Lower leg skin (tissue), 4 donors: ENCODE measurements at regions of chr2 and their contacts with region 1.

Region 1: DNA sequence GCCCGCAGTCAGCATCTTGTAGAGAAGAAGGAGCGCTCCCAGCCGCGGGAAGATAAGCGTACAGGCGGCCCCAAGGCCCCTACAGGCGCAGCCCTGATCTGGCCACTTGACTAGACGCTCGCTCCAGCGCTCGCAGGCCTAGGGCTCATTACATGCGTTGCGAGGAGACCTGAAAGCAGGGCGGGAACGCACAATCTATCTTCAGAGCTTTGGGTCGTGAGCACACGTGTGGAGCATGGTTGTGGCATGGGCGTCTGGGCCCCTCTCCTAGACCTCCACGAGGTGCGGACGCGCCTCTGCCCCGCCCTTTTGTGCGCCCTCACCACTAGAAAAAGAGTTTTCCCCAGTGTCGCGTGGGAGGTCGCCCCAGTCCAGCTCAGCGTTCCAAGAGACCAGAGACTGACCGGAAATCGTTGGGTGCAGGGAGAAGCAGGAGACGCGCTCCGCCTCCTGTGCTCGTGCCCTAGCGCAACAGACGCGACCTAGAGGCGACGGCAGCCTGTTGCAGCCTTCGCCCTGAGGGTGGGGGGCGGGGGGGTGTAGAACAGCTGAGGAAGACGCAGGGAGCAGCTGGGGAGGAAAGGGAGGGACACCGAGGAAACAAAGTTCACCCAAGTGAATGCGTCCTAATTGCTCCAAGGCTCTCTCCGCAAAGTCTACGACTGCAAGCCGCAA is 12.6 kb downstream of the NR4A2 start:
- DNase-seq: peak in 1 of 2 donors; percentile 88
- H3K4me3 ChIP-seq: no peak overlapping the region
- CTCF ChIP-seq: no peak
- POLR2A ChIP-seq: no peak

Region 2: DNA sequence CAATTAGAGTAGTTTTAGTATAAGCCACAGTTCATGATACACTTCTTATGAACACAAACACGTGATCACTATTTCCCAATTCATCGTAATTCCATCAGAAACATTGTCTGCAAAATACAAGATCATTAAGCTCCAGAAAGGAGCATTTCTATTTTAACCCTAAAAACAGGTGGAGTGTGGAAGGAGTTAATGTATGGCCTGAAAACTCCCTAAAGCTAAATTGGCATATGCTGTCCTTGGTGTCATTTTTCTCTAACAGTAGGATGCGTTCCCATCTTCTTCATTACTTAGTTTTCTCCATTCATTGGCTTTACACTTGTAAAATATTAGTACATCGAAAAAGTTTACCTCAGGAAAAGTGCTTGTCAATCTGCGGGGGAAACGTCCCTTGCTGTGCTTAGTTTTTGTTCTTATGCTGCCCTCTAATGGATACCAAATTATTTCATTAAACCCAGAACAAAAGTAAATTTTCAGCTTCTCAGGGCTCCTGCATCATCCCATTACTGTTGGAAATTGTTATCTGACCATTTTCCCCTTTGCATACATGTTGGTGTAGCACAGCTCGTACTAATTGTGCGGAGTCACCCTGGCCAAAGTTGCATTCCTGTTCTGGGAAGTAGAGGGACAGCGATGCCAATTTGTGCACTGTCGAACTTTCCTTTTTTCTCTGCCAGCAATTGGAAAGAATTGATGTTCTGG is 269.6 kb after region 1 on chr2:
- intact Hi-C with region 1: loop called (anchors 10 kb)
- DNase-seq: no peak
- H3K4me3 ChIP-seq: no peak overlapping the region
- CTCF ChIP-seq: no peak
- POLR2A ChIP-seq: no peak

Region 3: GRCh38 chr2:156803248-156803647 is 483.3 kb after region 1 on chr2:
- intact Hi-C with region 1: no loop called
- DNase-seq: no peak
- H3K4me3 ChIP-seq: no peak overlapping the region
- CTCF ChIP-seq: no peak
- POLR2A ChIP-seq: no peak